GM13976 (cell line): ENCODE measurements at regions of chr5 and their contacts with region 1.

Region 1: DNA sequence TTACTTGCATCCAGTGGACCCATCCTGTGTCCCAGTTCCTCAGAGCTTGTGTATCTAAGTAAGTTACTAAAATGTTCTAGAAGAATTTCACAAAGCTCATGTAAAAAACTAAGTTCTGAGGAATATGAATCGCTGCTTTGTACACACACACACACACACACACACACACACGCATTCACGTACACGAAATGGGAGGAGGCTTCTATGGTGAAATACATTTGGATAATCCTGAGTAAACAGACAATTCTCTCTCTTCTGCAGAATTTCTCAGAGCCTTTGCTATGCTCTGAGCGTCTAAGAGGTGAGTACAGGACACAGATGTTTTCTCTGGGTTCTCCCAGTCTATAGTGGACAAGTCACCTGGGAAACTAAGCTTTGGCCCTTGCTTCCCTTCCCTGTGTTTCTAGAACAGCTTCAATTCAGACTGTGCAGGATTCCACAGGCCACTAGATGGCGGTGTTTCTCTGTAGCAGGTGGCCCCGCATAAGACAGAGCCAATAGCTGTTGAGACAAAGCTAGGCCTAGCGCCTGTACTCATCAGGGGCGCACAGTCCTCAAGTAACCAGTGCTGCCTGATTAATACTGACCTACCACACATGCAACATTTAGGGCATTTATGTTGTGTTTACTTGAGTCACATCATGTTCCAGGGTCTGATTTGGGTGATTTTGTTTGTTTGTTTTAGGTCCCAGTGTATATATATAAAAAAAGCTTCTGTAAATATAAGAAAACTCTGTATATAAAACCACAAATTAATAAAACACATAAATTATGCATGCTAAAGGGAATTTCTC is 114.8 kb downstream of the LIFR start:
- DNase-seq: peak; percentile 82
- CTCF ChIP-seq: peak; percentile 93

Region 2: GRCh38 chr5:38104497-38105230 is 337.0 kb before region 1 on chr5:
- in situ Hi-C with region 1: no loop called
- DNase-seq: no peak
- CTCF ChIP-seq: no peak

Region 3: GRCh38 chr5:38297830-38298608 is 143.6 kb before region 1 on chr5:
- in situ Hi-C with region 1: no loop called
- DNase-seq: no peak
- CTCF ChIP-seq: no peak

Region 4: GRCh38 chr5:38666668-38667498 is 225.2 kb after region 1 on chr5:
- in situ Hi-C with region 1: loop called (anchors 25 kb)
- DNase-seq: no peak
- CTCF ChIP-seq: peak; percentile 13

Region 5: GRCh38 chr5:39080597-39081204 is 639.1 kb after region 1 on chr5:
- in situ Hi-C with region 1: loop called (anchors 25 kb)
- DNase-seq: peak; percentile 46
- CTCF ChIP-seq: peak; percentile 63